ENCODE measurements at regions of chr1 and their contacts with region 1.

Region 1: GRCh38 chr1:89358287-89358893 is 5.5 kb upstream of the GBP6 start:
- DNase-seq: peak; percentile 82
- ATAC-seq: peak; percentile 93

Region 2: GRCh38 chr1:88998716-88999115 is 359.7 kb before region 1 on chr1:
- intact Hi-C with region 1: loop called (anchors 1 kb)
- DNase-seq: no peak
- ATAC-seq: peak; percentile 89

Region 3: GRCh38 chr1:89085781-89086180 is 272.6 kb before region 1 on chr1:
- intact Hi-C with region 1: loop called (anchors 5 kb)
- DNase-seq: no peak
- ATAC-seq: no peak

Region 4: DNA sequence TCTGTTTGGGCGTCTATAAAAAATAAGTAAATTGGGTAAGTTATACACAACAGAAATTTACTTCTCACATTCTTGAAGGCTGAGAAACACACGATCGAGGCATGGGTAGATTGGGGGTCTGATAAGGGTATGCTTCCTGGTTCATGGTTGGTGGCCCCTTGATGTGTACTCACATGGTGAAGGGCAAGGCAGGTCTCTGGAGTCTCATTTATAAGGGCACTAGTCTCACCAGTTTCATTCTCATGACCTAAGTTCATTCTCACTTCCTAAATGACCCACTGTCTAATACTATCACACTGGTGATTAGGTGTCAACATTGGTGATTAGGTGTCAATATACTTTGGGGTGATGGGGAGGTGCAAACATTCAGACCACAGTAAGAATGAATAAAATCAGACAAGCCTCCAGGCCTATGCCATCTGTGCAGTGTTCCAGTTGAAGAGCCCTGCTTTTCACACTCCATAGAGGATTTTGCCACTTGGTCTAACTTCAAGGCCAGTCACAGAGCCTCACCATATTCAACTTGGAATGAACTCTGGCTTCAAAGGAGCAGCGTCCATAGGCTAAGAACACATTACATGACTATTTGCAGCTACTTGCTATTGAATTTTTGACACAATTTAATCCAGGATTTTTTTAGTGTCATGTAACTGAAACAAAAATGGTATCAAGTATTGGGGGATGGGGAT is 157.1 kb before region 1 on chr1:
- intact Hi-C with region 1: loop called (anchors 10 kb)
- DNase-seq: no peak
- ATAC-seq: no peak

Region 5: GRCh38 chr1:89298461-89298860 is 59.9 kb before region 1 on chr1:
- intact Hi-C with region 1: no loop called
- DNase-seq: no peak
- ATAC-seq: no peak

Region 6: DNA sequence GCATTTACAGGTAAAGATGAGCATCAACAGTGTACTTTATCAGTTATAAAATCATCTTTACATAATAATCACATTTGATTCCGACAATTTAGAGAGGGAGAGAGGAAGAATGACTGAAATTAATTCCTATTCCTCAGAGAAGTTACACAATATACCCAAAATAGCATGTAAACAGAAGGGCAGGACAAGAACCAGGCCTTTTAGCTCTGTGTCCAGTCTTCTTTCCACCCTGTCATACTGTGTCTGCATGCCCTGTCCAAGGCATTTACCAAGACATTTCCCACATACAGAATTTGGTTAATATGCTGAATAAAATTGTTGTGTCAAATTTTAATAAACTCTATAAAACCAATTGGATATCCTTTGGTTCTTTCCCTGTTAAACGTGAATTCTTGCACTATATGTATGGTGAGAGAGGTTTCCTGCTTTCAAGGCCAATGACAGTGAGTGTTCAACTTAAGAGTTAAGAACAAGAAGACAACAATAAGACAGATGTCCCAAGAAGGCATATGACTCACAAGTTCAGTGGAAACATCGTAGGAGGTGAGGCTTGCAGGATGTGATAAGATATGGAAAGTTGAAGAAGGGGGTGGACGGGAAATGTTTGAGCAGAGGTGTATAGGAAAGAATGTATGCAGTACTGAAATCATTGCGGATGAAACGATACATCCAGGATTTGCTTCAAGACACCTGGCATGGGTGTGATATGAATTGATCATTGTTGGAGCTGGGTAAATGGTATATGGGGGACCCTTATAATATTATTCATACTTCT is 187.1 kb after region 1 on chr1:
- intact Hi-C with region 1: no loop called
- DNase-seq: no peak
- ATAC-seq: peak; percentile 67

Region 7: DNA sequence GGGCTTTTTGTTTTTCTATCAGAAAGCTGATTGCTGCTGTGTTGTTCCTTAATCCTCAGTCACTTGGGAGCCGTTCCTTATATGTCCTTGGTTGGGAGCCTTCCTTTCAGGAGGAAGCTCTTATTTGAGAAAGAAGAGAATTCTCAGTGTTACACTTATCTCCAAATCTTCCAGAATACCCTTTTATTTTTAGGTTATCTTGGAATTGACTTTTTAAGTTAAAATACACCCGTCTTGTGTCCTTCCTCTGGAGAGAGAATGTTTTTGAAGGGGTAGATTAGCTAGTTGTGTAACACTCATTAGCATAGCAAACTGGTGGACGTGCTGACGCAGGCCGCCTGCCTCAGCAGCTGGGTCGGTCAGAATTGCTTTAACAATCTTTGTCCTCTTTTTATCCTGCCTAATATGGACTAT is 208.4 kb after region 1 on chr1:
- intact Hi-C with region 1: no loop called
- DNase-seq: peak; percentile 74
- ATAC-seq: peak; percentile 96